ENCODE measurements at regions of chr11 and their contacts with region 1.

Region 1: GRCh38 chr11:73965076-73965860 is 14.4 kb downstream of the DNAJB13 start:
- DNase-seq: no peak
- ATAC-seq: no peak
- H3K4me3 ChIP-seq: no peak overlapping the region
- H3K4me3 Mint-ChIP-seq: no peak overlapping the region
- H3K27ac ChIP-seq: no peak overlapping the region
- H3K27ac Mint-ChIP-seq: peak overlapping the region; percentile 53
- H3K4me1 ChIP-seq: peaks cover 22 to 38% of the 10 kb centered on the region in 2 donors
- H3K4me1 Mint-ChIP-seq: peaks cover 36% of the 10 kb centered on the region
- H3K27me3 ChIP-seq: no peaks in the 10 kb centered on the region
- H3K27me3 Mint-ChIP-seq: no peaks in the 10 kb centered on the region
- CTCF ChIP-seq: no peak

Region 2: DNA sequence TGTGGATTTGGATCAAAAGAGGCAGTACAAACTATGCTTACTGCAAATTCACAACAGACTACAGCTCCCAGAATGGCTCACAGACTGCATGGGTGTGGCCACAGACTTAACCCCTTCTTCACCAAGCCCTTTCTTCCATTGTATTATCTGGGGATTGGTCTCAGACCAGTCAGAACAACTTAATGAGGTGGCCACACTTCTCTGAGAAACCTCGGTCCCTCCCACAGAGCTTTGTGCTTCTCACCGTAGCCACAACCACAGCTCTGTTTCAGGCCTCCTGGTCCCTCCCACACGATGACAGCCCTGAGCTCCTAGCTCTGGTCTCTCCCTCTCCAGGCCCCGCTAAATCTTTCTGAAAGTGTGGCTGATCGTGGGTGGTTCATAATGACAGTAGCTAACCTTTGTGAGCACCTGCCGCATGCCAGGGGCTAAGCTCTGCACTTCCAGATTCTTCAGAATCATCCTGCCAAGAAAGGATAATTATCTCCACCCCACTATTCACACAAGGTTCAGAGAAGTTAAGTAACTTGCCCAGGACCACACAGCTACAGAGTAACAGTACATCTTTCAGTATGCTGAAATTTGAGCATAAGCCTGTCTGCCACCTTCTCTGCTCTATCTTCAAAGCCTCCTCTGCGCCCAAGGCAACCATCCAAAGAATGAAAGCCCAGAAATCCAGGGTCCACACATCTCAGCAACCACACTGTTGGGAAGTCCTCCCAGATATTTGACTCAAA is 1296.5 kb before region 1 on chr11:
- CTCF ChIA-PET with region 1: no interaction called
- POLR2A ChIA-PET with region 1: no interaction called
- intact Hi-C with region 1: no loop called
- DNase-seq: no peak
- ATAC-seq: no peak
- H3K4me3 ChIP-seq: no peak overlapping the region
- H3K4me3 Mint-ChIP-seq: no peak overlapping the region
- H3K27ac ChIP-seq: no peak overlapping the region
- H3K27ac Mint-ChIP-seq: no peak overlapping the region
- H3K4me1 ChIP-seq: peaks cover 11 to 17% of the 10 kb centered on the region in 2 donors
- H3K4me1 Mint-ChIP-seq: peaks cover 13% of the 10 kb centered on the region
- H3K27me3 ChIP-seq: peaks cover 0 to 81% (median 46%) of the 10 kb centered on the region in 4 experiments
- H3K27me3 Mint-ChIP-seq: peaks cover 67% of the 10 kb centered on the region
- CTCF ChIP-seq: no peak

Region 3: DNA sequence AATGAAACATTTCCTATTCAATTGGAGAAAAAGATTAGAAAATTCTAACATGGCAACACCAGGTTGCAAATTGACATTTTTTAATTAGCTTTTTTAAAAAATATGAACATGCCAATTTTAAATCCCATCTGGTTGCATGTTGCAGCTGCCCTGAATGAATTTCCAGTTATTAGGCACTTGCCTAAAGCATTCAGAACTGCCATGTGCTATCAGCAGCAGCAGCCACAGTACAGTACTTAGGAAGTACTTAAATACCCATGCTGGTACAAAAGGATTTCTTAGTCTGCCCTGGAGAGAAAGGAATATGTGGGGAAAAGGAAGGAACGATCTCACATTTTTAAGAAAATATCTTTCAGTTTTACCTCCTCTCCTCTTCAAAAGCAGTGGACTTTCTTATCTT is 413.6 kb before region 1 on chr11:
- CTCF ChIA-PET with region 1: no interaction called
- POLR2A ChIA-PET with region 1: no interaction called
- intact Hi-C with region 1: no loop called
- DNase-seq: no peak
- ATAC-seq: no peak
- H3K4me3 ChIP-seq: no peak overlapping the region
- H3K4me3 Mint-ChIP-seq: no peak overlapping the region
- H3K27ac ChIP-seq: no peak overlapping the region
- H3K27ac Mint-ChIP-seq: no peak overlapping the region
- H3K4me1 ChIP-seq: peaks cover 0 to 4% of the 10 kb centered on the region in 2 donors
- H3K4me1 Mint-ChIP-seq: peaks cover 24% of the 10 kb centered on the region
- H3K27me3 ChIP-seq: no peaks in the 10 kb centered on the region
- H3K27me3 Mint-ChIP-seq: no peaks in the 10 kb centered on the region
- CTCF ChIP-seq: no peak

Region 4: GRCh38 chr11:74004759-74005615 is 39.7 kb after region 1 on chr11:
- CTCF ChIA-PET with region 1: interaction called, 10 read pairs
- POLR2A ChIA-PET with region 1: interaction called, 4 read pairs
- intact Hi-C with region 1: no loop called
- DNase-seq: peak; percentile 69
- ATAC-seq: peak; percentile 99
- H3K4me3 ChIP-seq: no peak overlapping the region
- H3K4me3 Mint-ChIP-seq: no peak overlapping the region
- H3K27ac ChIP-seq: peak overlapping the region in 1 of 2 donors; percentile 20
- H3K27ac Mint-ChIP-seq: peak overlapping the region; percentile 43
- H3K4me1 ChIP-seq: peaks cover 26 to 31% of the 10 kb centered on the region in 2 donors
- H3K4me1 Mint-ChIP-seq: peaks cover 52% of the 10 kb centered on the region
- H3K27me3 ChIP-seq: no peaks in the 10 kb centered on the region
- H3K27me3 Mint-ChIP-seq: no peaks in the 10 kb centered on the region
- CTCF ChIP-seq: no peak

Region 5: DNA sequence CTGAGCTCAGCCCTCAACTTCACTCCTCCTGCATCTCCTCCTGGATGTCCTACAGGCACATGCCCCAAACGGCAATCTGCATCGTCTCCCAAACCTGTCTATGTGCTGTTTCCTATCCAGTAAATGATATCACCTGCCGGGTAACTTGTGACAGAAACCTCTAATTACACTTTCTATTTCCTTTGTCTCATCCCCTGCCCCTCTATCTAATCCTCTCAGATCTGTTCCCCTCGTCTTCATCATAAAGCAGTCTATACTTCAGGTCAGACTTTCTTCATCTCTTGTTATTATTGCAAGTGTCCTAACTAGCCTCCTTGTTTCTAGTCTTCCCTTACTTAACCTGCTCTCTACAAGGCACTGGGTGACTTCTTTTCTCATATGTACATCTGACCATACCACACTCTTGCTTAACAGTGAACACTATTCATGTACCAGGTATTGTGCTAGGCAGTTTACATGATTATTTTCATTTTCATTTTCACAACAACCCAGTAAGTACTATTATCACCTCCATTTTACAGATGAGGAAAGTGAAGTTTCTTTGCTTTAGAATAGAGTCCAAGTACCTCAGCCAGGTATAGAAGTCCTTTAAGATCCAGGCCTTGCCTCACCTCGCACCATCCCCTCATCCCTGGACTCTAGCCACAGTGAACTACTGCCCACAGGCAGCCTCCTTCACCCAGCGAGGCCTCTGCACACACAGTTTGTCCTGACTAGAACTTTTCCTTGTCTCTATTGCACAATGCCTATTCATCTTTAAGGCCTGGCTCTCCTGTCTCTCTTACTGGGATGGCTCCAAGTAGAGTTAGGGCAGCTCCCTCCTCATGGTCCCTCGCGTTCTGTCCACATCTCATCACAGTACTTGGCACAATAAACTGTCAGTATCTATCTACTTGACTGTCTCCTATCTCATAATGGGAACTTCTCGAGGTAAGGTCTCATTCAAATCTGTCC is 65.7 kb after region 1 on chr11:
- CTCF ChIA-PET with region 1: interaction called, 38 read pairs
- POLR2A ChIA-PET with region 1: interaction called, 7 read pairs
- intact Hi-C with region 1: loop called (anchors 1 kb)
- DNase-seq: no peak
- ATAC-seq: no peak
- H3K4me3 ChIP-seq: no peak overlapping the region
- H3K4me3 Mint-ChIP-seq: no peak overlapping the region
- H3K27ac ChIP-seq: no peak overlapping the region
- H3K27ac Mint-ChIP-seq: peak overlapping the region; percentile 23
- H3K4me1 ChIP-seq: peaks cover 0 to 7% of the 10 kb centered on the region in 2 donors
- H3K4me1 Mint-ChIP-seq: peaks cover 17% of the 10 kb centered on the region
- H3K27me3 ChIP-seq: no peaks in the 10 kb centered on the region
- H3K27me3 Mint-ChIP-seq: no peaks in the 10 kb centered on the region
- CTCF ChIP-seq: no peak

Region 6: DNA sequence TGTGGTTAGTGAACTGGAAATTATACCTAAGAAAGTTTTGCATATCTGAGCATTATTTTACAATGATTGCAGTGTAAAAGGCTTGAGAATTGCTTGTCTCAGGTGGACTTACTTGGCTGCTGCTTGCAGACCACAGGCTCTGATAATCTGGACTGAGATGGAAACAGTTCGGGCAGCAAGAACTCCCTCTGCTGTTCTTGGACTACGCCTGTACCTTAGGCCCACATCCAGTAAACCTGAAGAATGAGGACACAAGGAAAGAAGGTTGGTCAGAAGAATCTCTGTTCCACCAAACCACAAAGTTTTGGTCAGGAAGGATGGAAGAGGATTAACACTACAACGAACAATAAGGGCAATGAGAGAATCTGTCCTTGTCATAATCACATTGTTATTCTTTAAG is 125.4 kb after region 1 on chr11:
- CTCF ChIA-PET with region 1: interaction called, 7 read pairs
- POLR2A ChIA-PET with region 1: no interaction called
- intact Hi-C with region 1: loop called (anchors 1 kb)
- DNase-seq: peak; percentile 22
- ATAC-seq: no peak
- H3K4me3 ChIP-seq: no peak overlapping the region
- H3K4me3 Mint-ChIP-seq: no peak overlapping the region
- H3K27ac ChIP-seq: no peak overlapping the region
- H3K27ac Mint-ChIP-seq: no peak overlapping the region
- H3K4me1 ChIP-seq: no peaks in the 10 kb centered on the region
- H3K4me1 Mint-ChIP-seq: no peaks in the 10 kb centered on the region
- H3K27me3 ChIP-seq: no peaks in the 10 kb centered on the region
- H3K27me3 Mint-ChIP-seq: no peaks in the 10 kb centered on the region
- CTCF ChIP-seq: no peak

Region 7: DNA sequence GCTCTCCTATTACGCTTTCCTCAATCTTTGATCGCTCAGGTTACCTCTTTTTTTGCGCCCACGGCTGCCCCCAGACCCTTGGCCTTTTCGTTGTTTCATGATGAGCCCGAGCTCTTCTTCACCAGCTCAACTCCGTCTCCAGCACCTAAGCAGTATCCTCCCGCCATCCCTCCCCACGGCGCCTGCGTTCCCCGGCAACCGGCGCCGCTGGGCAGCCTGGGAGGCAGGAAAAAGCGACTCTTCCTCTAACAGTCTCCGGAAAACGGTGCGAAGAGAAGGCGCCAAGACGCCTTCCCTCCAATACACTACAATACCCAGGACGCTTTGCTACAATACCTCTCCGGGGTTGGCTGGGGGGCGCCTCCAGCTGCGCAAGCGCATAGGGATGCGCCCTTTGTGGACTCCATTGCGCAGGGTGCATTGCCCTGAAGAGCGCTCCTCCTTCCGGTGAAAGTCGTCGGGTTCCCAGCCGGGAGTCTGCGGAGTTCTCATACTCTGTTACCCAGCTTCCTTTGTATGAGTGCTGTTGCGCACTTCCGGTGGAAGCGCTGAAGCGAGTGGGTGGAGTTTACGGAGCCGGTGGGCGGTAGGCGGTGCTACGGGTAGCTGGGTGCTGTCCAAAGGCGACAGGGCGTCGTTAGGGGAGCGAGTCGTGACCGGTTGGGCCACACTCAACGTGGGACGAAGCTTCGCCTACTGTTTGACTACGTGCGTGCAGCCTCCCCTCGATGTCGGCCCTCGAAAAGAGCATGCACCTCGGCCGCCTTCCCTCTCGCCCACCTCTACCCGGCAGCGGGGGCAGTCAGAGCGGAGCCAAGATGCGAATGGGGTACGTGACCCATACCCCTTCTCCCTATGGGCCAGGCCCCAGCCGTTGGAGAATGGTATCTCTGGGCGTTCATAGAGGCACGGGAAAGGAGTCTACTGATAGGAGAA is 205.7 kb after region 1 on chr11 and contains the starts of genes C2CD3 and PPME1:
- CTCF ChIA-PET with region 1: interaction called, 6 read pairs
- POLR2A ChIA-PET with region 1: no interaction called
- intact Hi-C with region 1: loop called (anchors 2 kb)
- DNase-seq: peak; percentile 99
- ATAC-seq: peak; percentile 94
- H3K4me3 ChIP-seq: peak within 1 kb of the TSS; percentile 82 to 95 (median 85)
- H3K4me3 Mint-ChIP-seq: no peak within 1 kb of the TSS
- H3K27ac ChIP-seq: peak within 1 kb of the TSS; percentile 73 to 80
- H3K27ac Mint-ChIP-seq: no peak within 1 kb of the TSS
- H3K4me1 ChIP-seq: peaks cover 22 to 26% of the 10 kb centered on the region in 2 donors
- H3K4me1 Mint-ChIP-seq: peaks cover 6% of the 10 kb centered on the region
- H3K27me3 ChIP-seq: no peaks in the 10 kb centered on the region
- H3K27me3 Mint-ChIP-seq: no peaks in the 10 kb centered on the region
- CTCF ChIP-seq: peak; percentile 11
- total RNA-seq, gene C2CD3: 63.9 and 69.0 TPM in 2 replicates
- total RNA-seq, gene PPME1: 18.7 and 23.6 TPM in 2 replicates

Region 8: GRCh38 chr11:74255741-74256369 is 290.6 kb after region 1 on chr11:
- CTCF ChIA-PET with region 1: interaction called, 9 read pairs
- POLR2A ChIA-PET with region 1: no interaction called
- intact Hi-C with region 1: loop called (anchors 2 kb)
- DNase-seq: peak; percentile 72
- ATAC-seq: peak; percentile 51
- H3K4me3 ChIP-seq: no peak overlapping the region
- H3K4me3 Mint-ChIP-seq: no peak overlapping the region
- H3K27ac ChIP-seq: no peak overlapping the region
- H3K27ac Mint-ChIP-seq: no peak overlapping the region
- H3K4me1 ChIP-seq: no peaks in the 10 kb centered on the region
- H3K4me1 Mint-ChIP-seq: no peaks in the 10 kb centered on the region
- H3K27me3 ChIP-seq: no peaks in the 10 kb centered on the region
- H3K27me3 Mint-ChIP-seq: no peaks in the 10 kb centered on the region
- CTCF ChIP-seq: peak; percentile 93

Region 9: DNA sequence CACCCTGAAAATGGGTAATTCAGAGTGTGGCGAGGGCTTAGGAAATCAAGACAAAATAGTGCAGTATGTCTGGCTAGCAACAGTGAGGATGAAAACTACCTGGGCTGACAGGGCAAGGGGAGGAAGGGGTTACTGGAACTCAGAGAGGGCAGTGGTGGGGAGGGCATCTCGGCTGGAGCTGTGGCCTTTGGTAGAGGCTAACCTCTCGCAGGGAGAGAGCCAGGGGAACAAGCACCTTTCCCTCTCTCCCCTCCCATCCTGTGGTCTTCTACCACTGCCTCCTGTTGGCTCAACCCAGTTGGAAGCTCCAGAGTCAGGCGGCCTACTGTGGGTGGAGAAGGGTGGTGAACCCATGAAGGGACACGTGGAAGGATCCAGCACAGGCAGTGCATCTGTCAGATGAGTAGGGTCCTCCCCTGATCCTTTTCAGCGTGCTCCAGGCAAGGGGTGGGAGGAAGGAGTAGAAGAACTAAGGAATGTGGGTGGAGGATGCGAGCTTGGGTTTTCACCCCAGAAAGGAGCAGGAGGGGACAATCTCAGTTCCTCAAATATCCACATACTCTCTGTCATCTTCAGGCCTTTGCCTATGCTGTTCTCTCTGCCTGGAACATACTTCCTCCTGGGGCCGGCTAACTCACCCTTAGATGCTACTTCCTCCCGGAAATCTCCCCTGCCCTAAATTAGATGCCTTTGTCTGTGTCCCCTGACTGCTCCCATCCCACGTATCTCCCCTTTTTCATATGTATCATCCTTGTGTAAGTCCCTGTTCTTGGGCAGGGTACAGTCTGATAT is 508.3 kb after region 1 on chr11:
- CTCF ChIA-PET with region 1: no interaction called
- POLR2A ChIA-PET with region 1: interaction called, 12 read pairs
- intact Hi-C with region 1: no loop called
- DNase-seq: no peak
- ATAC-seq: no peak
- H3K4me3 ChIP-seq: no peak overlapping the region
- H3K4me3 Mint-ChIP-seq: no peak overlapping the region
- H3K27ac ChIP-seq: no peak overlapping the region
- H3K27ac Mint-ChIP-seq: no peak overlapping the region
- H3K4me1 ChIP-seq: no peaks in the 10 kb centered on the region
- H3K4me1 Mint-ChIP-seq: no peaks in the 10 kb centered on the region
- H3K27me3 ChIP-seq: peaks cover 0 to 2% (median under 1%) of the 10 kb centered on the region in 4 experiments
- H3K27me3 Mint-ChIP-seq: peaks cover 16% of the 10 kb centered on the region
- CTCF ChIP-seq: no peak